ENCODE measurements at regions of chr13 and their contacts with region 1.

Region 1: DNA sequence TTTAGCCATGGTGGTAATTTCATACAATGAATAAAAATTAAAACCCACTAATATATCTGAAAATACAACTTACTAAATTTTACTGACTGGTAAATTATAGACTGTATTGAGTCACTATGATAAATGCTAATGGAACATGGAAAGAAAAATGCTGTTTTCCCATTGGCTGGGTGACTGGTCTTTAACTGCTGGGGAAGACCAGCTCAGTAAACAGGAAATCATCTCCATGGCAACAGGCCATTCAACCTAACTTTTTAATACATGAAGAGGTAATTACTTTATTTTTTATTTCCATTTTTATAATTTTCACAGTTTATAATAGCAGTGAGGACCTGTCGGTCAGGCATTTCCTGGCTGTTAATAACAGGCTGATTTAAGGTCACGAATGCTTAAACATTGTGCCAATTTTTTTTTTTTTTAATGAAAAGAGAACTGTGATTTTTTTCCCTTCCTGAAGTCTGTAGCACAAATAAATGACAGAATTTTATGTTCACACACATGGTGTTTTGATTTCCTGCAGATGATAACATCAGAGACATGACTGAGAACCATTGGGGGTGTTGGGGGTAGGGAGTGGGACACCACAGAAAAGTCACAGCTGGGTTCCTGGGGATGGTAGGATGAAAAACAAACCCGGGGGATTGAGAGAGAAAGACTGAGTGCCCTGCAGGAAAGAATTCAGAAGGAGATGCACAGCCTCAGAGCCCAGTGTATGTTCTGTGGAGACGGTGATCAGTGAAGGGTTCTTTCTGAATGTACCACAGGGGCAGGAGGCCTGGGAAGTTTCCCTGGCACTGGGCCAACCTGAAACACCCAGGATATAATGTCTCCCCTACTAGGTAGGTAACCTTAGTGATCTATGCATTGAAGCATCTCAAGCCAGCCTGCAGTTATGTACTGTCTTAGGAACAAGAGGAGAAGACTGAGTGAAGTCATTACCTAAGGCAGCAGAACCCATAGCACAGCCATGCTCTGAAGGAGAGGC is 297.1 kb downstream of the COG6 start:
- DNase-seq: peak in 2 of 9 donors; percentile 11 to 23
- ATAC-seq: peak; percentile 46
- H3K4me3 ChIP-seq: no peak overlapping the region
- H3K4me3 Mint-ChIP-seq: peak overlapping the region in 9 of 10 donors; percentile 13 to 74 (median 53)
- H3K27ac ChIP-seq: no peak overlapping the region
- H3K27ac Mint-ChIP-seq: peak overlapping the region; percentile 34 to 89 (median 82)
- H3K4me1 ChIP-seq: peaks cover 13 to 17% of the 10 kb centered on the region in 2 donors
- H3K4me1 Mint-ChIP-seq: peaks cover 27 to 60% (median 50%) of the 10 kb centered on the region in 7 donors
- H3K27me3 ChIP-seq: no peaks in the 10 kb centered on the region
- H3K27me3 Mint-ChIP-seq: peaks cover 0 to 6% (median 0%) of the 10 kb centered on the region in 5 donors

Region 2: DNA sequence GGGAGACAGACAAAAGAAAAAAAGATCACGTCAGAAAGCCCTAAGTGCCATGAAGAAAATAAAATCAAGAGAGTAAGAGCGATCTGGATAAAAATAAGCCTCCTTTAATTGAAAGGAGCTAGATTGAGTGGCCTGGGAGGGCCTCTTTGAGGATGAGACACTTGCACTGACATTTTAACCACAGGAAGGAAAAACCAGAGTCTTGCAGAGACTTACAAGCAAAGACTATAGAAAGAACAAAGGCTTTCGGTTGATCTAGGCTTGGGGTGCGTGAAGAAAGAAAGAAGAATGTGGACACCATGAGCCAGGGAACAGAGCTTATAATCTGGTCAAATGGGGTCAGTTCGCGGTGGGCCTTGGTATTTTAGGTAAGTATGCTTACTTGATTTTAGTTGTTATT is 45.6 kb after region 1 on chr13:
- CTCF ChIA-PET with region 1: no interaction called
- POLR2A ChIA-PET with region 1: no interaction called
- intact Hi-C with region 1: loop called in 1 of 2 experiments (anchors 5 kb)
- DNase-seq: peak in 7 of 9 donors; percentile 47 to 72 (median 61)
- ATAC-seq: peak; percentile 80
- H3K4me3 ChIP-seq: no peak overlapping the region
- H3K4me3 Mint-ChIP-seq: peak overlapping the region; percentile 6 to 82 (median 62)
- H3K27ac ChIP-seq: no peak overlapping the region
- H3K27ac Mint-ChIP-seq: peak overlapping the region in 8 of 9 donors; percentile 3 to 82 (median 68)
- H3K4me1 ChIP-seq: peaks cover 0 to 22% of the 10 kb centered on the region in 2 donors
- H3K4me1 Mint-ChIP-seq: peaks cover 12 to 45% (median 36%) of the 10 kb centered on the region in 7 donors
- H3K27me3 ChIP-seq: no peaks in the 10 kb centered on the region
- H3K27me3 Mint-ChIP-seq: peaks cover 0 to 19% (median 0%) of the 10 kb centered on the region in 5 donors